Transverse colon (tissue), 4 donors: ENCODE measurements at regions of chr3 and their contacts with region 1.

Region 1: DNA sequence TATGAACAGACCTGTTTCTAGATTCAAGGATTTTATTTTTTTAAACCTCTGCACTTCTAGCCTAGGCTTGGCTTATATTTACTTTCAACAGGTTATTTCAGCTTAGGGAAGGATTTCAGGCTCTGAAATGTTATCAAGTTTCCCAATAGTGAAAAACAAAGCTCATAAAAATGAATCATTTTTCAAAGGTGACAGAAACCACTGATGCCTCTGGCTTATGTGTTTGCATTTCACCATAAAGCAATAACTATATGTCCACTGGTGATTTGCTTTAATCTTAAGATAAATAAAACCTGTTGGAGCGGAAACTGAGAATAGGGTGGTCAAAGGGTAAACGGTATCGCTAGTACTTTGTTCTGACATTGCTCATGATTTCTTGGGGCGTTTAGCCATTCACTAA is 141.2 kb upstream of the LRIG1 start:
- DNase-seq: no peak
- H3K4me3 ChIP-seq: no peak overlapping the region
- H3K27ac ChIP-seq: peak overlapping the region in 1 of 4 donors; percentile 45
- H3K4me1 ChIP-seq: peaks cover 0 to 8% (median 0%) of the 10 kb centered on the region in 4 donors
- H3K27me3 ChIP-seq: no peaks in the 10 kb centered on the region
- CTCF ChIP-seq: no peak
- EP300 ChIP-seq: no peak
- POLR2A ChIP-seq: no peak

Region 2: DNA sequence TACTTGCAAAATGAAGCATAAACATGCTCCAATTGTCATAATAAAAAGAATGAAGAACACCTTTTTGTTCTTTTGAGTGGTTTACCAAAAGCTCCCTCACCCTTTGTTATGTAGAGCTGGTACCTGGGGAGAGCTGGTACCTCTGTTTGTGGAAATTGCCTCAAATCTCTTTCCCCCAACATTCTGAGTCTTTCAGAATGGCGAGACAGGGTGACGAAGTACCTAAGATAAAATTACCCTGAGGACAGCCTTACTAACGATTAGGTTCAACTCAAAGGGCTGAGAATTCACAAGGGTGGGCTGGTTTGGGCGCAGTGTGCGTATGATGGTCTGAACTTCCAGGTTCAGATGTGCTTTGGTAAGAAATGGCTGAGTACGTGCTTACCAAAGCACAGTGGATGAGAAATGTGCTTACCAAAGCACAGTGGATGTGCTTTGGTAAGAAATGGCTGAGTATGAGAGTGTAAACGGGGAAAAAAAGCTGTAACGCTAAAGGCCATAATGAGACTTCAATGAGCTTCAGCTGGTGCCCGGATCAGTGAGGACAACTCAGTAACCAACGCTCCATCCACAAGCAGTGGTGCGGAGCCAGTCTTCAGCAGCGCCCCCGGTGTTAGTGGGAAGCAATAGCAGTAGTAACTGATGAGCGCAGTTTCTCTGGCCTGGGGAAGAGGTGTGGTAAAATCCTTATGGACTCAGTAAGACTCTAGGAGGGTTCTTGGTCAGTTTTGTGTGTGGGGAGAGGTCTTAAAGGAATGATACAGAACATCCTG is 68.9 kb before region 1 on chr3:
- in situ Hi-C with region 1: no loop called
- intact Hi-C with region 1: loop called (anchors 2 kb)
- DNase-seq: no peak
- H3K4me3 ChIP-seq: no peak overlapping the region
- H3K27ac ChIP-seq: no peak overlapping the region
- H3K4me1 ChIP-seq: no peaks in the 10 kb centered on the region
- H3K27me3 ChIP-seq: no peaks in the 10 kb centered on the region
- CTCF ChIP-seq: no peak
- EP300 ChIP-seq: no peak
- POLR2A ChIP-seq: no peak

Region 3: GRCh38 chr3:66625505-66626216 is 16.4 kb before region 1 on chr3:
- in situ Hi-C with region 1: no loop called
- intact Hi-C with region 1: no loop called
- DNase-seq: no peak
- H3K4me3 ChIP-seq: no peak overlapping the region
- H3K27ac ChIP-seq: peak overlapping the region in 1 of 4 donors; percentile 24
- H3K4me1 ChIP-seq: peaks cover 0 to 20% (median 8%) of the 10 kb centered on the region in 4 donors
- H3K27me3 ChIP-seq: no peaks in the 10 kb centered on the region
- CTCF ChIP-seq: no peak
- EP300 ChIP-seq: no peak
- POLR2A ChIP-seq: no peak

Region 4: GRCh38 chr3:66797889-66798560 is 156.0 kb after region 1 on chr3:
- in situ Hi-C with region 1: no loop called
- intact Hi-C with region 1: no loop called
- DNase-seq: peak; percentile 24
- H3K4me3 ChIP-seq: no peak overlapping the region
- H3K27ac ChIP-seq: no peak overlapping the region
- H3K4me1 ChIP-seq: no peaks in the 10 kb centered on the region
- H3K27me3 ChIP-seq: peaks cover 7% of the 10 kb centered on the region
- CTCF ChIP-seq: no peak
- EP300 ChIP-seq: no peak
- POLR2A ChIP-seq: no peak